H1 (cell line): ENCODE measurements at regions of chr1 and their contacts with region 1.

Region 1: GRCh38 chr1:94396356-94397010 is 21.7 kb upstream of the ABCD3 start:
- DNase-seq: no peak
- H3K4me3 ChIP-seq: no peak overlapping the region
- H3K27ac ChIP-seq: no peak overlapping the region
- H3K4me1 ChIP-seq: peaks cover 0 to 13% (median 3%) of the 10 kb centered on the region in 4 experiments; a peak in 5 of 7 replicates
- H3K27me3 ChIP-seq: no peaks in the 10 kb centered on the region
- CTCF ChIP-seq: peak; percentile 29 to 48 (median 47)
- EP300 ChIP-seq: no peak
- POLR2A ChIP-seq: no peak
- RAD21 ChIP-seq: peak in 1 of 2 experiments; percentile 58; a peak in 2 of 4 replicates

Region 2: DNA sequence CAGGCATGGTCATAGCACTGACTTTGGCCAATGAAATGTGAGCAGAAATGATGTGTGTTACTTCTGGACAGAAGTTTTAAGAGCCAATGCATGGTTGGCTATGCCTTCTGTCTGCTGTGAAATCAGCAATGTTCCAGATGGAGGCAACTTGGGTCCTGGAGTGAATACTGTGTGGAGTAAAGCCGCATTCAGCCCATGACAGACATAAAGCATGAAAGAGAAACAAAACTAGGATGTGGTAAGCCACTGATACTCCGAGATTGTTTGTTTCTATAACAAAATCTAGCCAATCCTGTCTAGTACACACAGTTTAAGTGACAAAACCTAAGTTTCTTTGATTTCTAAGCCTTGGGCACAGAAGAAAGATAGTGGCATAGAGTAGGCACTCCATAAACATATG is 112.0 kb before region 1 on chr1:
- CTCF ChIA-PET with region 1: no interaction called
- POLR2A ChIA-PET with region 1: no interaction called
- DNase-seq: no peak
- H3K4me3 ChIP-seq: no peak overlapping the region
- H3K27ac ChIP-seq: no peak overlapping the region
- H3K4me1 ChIP-seq: no peaks in the 10 kb centered on the region
- H3K27me3 ChIP-seq: no peaks in the 10 kb centered on the region
- CTCF ChIP-seq: no peak
- EP300 ChIP-seq: no peak
- POLR2A ChIP-seq: no peak
- RAD21 ChIP-seq: no peak

Region 3: GRCh38 chr1:94383966-94384408 is 12.5 kb before region 1 on chr1:
- CTCF ChIA-PET with region 1: interaction called, 12 read pairs
- POLR2A ChIA-PET with region 1: no interaction called
- DNase-seq: no peak
- H3K4me3 ChIP-seq: no peak overlapping the region
- H3K27ac ChIP-seq: no peak overlapping the region
- H3K4me1 ChIP-seq: no peaks in the 10 kb centered on the region
- H3K27me3 ChIP-seq: no peaks in the 10 kb centered on the region
- CTCF ChIP-seq: no peak
- EP300 ChIP-seq: no peak
- POLR2A ChIP-seq: no peak
- RAD21 ChIP-seq: no peak

Region 4: GRCh38 chr1:94408104-94408830 is 11.8 kb after region 1 on chr1:
- CTCF ChIA-PET with region 1: interaction called, 10 read pairs
- POLR2A ChIA-PET with region 1: interaction called, 3 read pairs
- DNase-seq: no peak
- H3K4me3 ChIP-seq: no peak overlapping the region
- H3K27ac ChIP-seq: no peak overlapping the region
- H3K4me1 ChIP-seq: peaks cover 0 to 4% (median 0%) of the 10 kb centered on the region in 4 experiments; a peak in 1 of 7 replicates
- H3K27me3 ChIP-seq: no peaks in the 10 kb centered on the region
- CTCF ChIP-seq: no peak
- EP300 ChIP-seq: no peak
- POLR2A ChIP-seq: no peak
- RAD21 ChIP-seq: no peak

Region 5: GRCh38 chr1:94416901-94417727 is 20.6 kb after region 1 on chr1:
- CTCF ChIA-PET with region 1: interaction called, 10 read pairs
- POLR2A ChIA-PET with region 1: no interaction called
- DNase-seq: no peak
- H3K4me3 ChIP-seq: peak overlapping the region; percentile 75 to 94 (median 90)
- H3K27ac ChIP-seq: no peak overlapping the region
- H3K4me1 ChIP-seq: peaks cover 0 to 4% (median 0%) of the 10 kb centered on the region in 4 experiments; a peak in 4 of 7 replicates
- H3K27me3 ChIP-seq: peaks cover 0 to 3% (median 0%) of the 10 kb centered on the region in 4 experiments; a peak in 2 of 7 replicates
- CTCF ChIP-seq: no peak
- EP300 ChIP-seq: no peak
- POLR2A ChIP-seq: no peak
- RAD21 ChIP-seq: no peak